ENCODE measurements at regions of chr20 and their contacts with region 1.

Region 1: DNA sequence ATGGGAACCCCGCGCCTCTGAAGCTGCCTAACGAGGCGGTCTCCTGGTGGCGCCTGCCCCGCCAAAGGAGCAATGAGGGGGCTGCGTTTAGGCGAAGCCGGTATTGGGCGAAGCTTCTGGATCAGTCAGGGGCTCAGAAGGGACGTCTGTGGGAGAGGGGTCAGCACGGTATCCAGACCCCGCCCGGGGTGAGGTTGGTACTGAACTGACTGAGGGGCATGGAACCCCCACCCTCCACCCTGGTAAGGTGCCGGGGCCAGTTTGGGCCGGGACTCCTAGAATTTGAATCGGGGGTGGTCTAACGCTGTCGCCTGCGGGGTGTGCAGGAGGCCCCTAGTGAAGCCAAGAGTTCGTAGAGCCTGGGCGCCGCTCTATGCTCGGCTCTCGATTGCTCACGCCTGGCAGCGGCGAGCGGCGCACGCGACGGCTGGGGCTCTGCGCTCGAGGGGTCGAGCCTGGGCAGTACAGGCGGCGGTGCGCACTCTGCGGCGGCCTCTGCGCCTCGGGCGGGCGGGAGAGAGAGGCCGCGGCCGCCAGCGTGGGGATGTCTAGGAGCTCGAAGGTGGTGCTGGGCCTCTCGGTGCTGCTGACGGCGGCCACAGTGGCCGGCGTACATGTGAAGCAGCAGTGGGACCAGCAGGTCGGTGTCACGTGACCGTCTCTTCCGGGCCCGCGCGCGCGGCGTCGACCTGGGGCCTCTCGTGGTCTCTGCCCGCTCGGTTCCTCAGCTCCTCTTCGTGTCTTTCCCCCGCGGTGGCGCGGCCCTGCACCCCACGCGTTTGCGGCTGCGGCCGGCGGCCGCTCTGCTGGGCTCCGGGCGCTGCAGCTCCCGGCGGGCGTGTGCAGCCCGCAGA is at the starts of genes KAT14 and PET117:
- DNase-seq: peak; percentile 73
- H3K4me3 Mint-ChIP-seq: peak within 1 kb of the TSS; percentile 71
- H3K27ac Mint-ChIP-seq: peak within 1 kb of the TSS; percentile 66
- H3K4me1 Mint-ChIP-seq: peaks cover 17% of the 10 kb centered on the region
- H3K27me3 Mint-ChIP-seq: no peaks in the 10 kb centered on the region
- CTCF ChIP-seq: no peak
- total RNA-seq, gene KAT14: 3.1 and 4.4 TPM in 2 replicates
- total RNA-seq, gene PET117: 5.2 and 6.0 TPM in 2 replicates

Region 2: GRCh38 chr20:18066421-18067336 is 71.0 kb before region 1 on chr20:
- CTCF ChIA-PET with region 1: no interaction called
- intact Hi-C with region 1: loop called (anchors 10 kb)
- DNase-seq: no peak
- H3K4me3 Mint-ChIP-seq: no peak overlapping the region
- H3K27ac Mint-ChIP-seq: no peak overlapping the region
- H3K4me1 Mint-ChIP-seq: no peaks in the 10 kb centered on the region
- H3K27me3 Mint-ChIP-seq: no peaks in the 10 kb centered on the region
- CTCF ChIP-seq: no peak

Region 3: DNA sequence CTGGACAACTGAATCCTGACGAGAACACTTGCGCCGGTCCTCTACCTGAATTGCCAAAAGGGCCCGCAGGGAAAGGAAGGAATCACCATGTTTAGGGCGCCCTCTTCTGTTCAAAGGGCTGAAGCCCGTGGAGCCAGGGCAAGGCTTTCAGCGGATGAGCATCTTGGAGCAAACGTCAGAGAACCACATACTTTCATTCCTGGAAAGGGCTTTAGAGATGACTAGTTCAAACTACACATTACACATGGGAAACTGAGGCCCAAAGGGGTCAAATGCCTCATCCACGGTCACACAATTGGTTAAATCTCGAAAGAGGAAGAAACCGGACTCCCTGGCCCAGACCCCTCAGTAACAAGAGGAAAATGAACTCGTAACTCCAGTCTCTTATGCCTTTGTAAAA is 139.2 kb after region 1 on chr20:
- CTCF ChIA-PET with region 1: no interaction called
- intact Hi-C with region 1: loop called (anchors 5 kb)
- DNase-seq: peak; percentile 67
- H3K4me3 Mint-ChIP-seq: no peak overlapping the region
- H3K27ac Mint-ChIP-seq: no peak overlapping the region
- H3K4me1 Mint-ChIP-seq: peaks cover 8% of the 10 kb centered on the region
- H3K27me3 Mint-ChIP-seq: no peaks in the 10 kb centered on the region
- CTCF ChIP-seq: peak; percentile 27

Measured in Calu3 (cell line).